Head of caudate nucleus (tissue), 42 donors: ENCODE measurements at regions of chr11 and their contacts with region 1.

Region 1: DNA sequence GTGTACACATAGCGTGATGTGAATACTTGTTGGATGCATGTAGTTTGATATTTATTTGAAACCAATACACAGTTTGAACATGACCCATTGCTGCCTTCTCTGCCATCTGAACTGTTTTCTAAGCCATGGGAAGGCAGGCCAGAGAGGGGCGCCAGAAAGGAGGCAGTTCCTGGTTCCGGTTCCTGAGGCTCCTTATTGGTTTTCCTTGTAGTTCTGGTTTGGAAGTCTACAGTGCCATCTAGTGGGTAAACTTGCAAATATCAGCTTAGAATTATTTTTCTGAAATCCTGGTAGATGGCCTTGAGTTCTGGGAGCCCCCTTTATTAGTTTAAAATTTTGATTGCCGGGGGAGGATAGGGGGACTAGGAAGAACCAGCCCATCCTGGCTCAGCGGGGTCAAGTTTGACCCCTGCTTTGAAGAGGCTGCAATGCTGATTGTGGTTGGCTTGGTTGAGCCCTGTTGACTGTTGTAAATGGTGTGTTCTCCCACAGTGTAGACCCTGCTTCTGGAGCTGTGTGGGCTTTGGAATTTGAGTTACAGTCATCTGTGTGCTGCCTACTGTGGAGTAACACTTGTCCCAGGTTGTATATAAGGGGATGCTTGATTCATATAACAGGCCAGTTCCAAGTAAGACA is 48.4 kb downstream of the GRAMD1B start:
- DNase-seq: peak in 41 of 42 donors; percentile 20 to 81 (median 53)

Region 2: DNA sequence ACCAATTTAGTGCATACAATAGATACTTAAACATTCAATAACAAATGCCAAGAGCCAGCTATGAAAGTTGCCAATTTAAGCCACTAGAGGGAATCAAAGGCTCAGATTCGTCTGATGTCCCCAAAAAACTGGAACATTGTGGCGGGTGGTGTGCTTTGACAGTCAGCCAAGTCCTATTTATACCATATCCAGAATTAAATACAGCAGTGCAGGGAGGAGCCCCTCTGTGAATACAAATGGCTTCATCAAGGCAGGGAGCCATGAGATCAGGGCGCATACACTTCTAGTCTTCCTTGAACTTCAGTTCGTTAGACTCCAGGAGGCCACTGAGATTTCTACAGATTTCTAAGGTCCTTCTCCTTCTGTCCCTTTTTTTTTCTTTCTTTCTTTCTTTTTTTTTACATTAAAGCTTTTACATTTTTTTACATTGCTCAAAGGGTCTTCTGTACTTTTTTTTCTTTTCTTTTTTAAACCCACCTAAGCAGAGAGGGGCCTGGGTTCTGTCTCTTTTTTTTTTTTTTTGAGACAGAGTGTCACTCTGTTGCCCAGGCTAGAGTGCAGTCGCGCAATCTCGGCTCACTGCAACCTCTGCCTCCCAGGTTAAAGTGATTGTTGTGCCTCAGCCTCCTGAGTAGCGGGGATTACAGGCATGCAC is 375.0 kb before region 1 on chr11:
- intact Hi-C with region 1: loop called (anchors 10 kb)
- DNase-seq: peak in 41 of 42 donors; percentile 18 to 86 (median 58)

Region 3: GRCh38 chr11:123291201-123291869 is 187.1 kb before region 1 on chr11:
- intact Hi-C with region 1: no loop called
- DNase-seq: no peak

Region 4: GRCh38 chr11:123301696-123302400 is 176.6 kb before region 1 on chr11:
- intact Hi-C with region 1: loop called (anchors 5 kb)
- DNase-seq: peak in 41 of 42 donors; percentile 22 to 86 (median 69)

Region 5: GRCh38 chr11:123407130-123407995 is 71.1 kb before region 1 on chr11:
- intact Hi-C with region 1: loop called (anchors 10 kb)
- DNase-seq: peak in 35 of 42 donors; percentile 11 to 69 (median 37)